SK-N-SH (cell line): ENCODE measurements at regions of chr5 and their contacts with region 1.

Region 1: DNA sequence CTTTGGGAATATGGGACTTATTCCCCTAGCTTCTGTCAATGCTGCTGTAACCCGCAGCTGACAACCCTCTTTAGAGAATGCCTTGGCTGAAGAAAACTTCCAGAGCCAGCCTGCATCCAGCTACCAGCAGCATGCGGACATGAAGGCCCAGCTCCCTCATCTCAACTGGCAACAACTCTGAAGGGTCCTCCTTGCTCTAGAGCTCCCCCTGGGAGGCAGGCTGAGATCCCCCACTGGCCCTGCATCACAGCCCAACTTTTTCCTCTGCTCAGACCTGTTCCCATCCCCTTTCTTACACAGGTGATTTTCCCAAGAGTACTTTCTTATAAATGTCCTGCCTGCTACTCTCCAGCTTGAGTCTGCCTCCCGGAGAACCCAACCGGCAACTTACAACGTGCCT is 18.7 kb upstream of the WNT8A start:
- DNase-seq: no peak
- H3K4me3 ChIP-seq: no peak overlapping the region
- H3K27ac ChIP-seq: no peak overlapping the region
- H3K4me1 ChIP-seq: no peaks in the 10 kb centered on the region
- H3K27me3 ChIP-seq: no peaks in the 10 kb centered on the region
- CTCF ChIP-seq: peak; percentile 30
- EP300 ChIP-seq: no peak
- RAD21 ChIP-seq: no peak

Region 2: DNA sequence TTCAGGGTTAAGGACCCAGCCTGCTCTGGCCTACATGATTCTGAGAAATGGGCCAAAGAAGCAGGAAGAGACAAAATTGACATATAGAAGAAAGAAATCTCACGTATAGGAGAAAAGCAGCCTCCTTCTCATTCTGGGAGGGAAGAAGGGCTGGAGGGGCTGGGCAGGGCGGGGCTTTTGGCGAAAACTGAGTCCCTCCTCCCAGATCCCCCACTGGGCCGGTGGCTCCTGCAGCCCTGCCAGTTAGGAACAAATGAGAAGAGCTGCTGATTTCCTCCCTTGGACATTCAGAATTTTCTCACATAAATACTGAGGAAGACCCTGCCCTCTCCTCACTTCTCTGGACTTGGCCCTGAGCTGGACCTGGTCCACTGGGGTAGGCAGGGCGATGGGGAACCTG is 18.6 kb after region 1 on chr5 and contains the start of gene WNT8A:
- CTCF ChIA-PET with region 1: interaction called, 84 read pairs
- POLR2A ChIA-PET with region 1: no interaction called
- DNase-seq: no peak
- H3K4me3 ChIP-seq: no peak within 1 kb of the TSS
- H3K27ac ChIP-seq: no peak within 1 kb of the TSS
- H3K4me1 ChIP-seq: no peaks in the 10 kb centered on the region
- H3K27me3 ChIP-seq: no peaks in the 10 kb centered on the region
- CTCF ChIP-seq: no peak
- EP300 ChIP-seq: no peak
- RAD21 ChIP-seq: no peak
- polyA plus RNA-seq, gene WNT8A: not detected in 2 replicates

Region 3: GRCh38 chr5:138128334-138128733 is 63.2 kb after region 1 on chr5:
- CTCF ChIA-PET with region 1: interaction called, 11 read pairs
- POLR2A ChIA-PET with region 1: no interaction called
- DNase-seq: no peak
- H3K4me3 ChIP-seq: no peak overlapping the region
- H3K27ac ChIP-seq: no peak overlapping the region
- H3K4me1 ChIP-seq: no peaks in the 10 kb centered on the region
- H3K27me3 ChIP-seq: no peaks in the 10 kb centered on the region
- CTCF ChIP-seq: no peak
- EP300 ChIP-seq: no peak
- RAD21 ChIP-seq: no peak

Region 4: GRCh38 chr5:138663009-138663408 is 597.9 kb after region 1 on chr5:
- CTCF ChIA-PET with region 1: no interaction called
- POLR2A ChIA-PET with region 1: no interaction called
- DNase-seq: peak; percentile 46
- H3K4me3 ChIP-seq: no peak overlapping the region
- H3K27ac ChIP-seq: no peak overlapping the region
- H3K4me1 ChIP-seq: peaks cover 0 to 11% of the 10 kb centered on the region in 2 experiments; a peak in 1 of 4 replicates
- H3K27me3 ChIP-seq: no peaks in the 10 kb centered on the region
- CTCF ChIP-seq: no peak
- EP300 ChIP-seq: no peak
- RAD21 ChIP-seq: no peak